Activated CD4-positive, alpha-beta memory T cell treated with anti-CD3 and anti-CD28 coated beads for 36 hours (primary cell): ENCODE measurements at regions of chrX and their contacts with region 1.

Region 1: GRCh38 chrX:24024819-24025740 is 1.9 kb downstream of the KLHL15 start:
- DNase-seq: peak; percentile 91
- H3K4me3 Mint-ChIP-seq: peak overlapping the region; percentile 80
- H3K27ac Mint-ChIP-seq: no peak overlapping the region
- H3K4me1 Mint-ChIP-seq: peaks cover 25% of the 10 kb centered on the region
- H3K27me3 Mint-ChIP-seq: no peaks in the 10 kb centered on the region

Region 2: DNA sequence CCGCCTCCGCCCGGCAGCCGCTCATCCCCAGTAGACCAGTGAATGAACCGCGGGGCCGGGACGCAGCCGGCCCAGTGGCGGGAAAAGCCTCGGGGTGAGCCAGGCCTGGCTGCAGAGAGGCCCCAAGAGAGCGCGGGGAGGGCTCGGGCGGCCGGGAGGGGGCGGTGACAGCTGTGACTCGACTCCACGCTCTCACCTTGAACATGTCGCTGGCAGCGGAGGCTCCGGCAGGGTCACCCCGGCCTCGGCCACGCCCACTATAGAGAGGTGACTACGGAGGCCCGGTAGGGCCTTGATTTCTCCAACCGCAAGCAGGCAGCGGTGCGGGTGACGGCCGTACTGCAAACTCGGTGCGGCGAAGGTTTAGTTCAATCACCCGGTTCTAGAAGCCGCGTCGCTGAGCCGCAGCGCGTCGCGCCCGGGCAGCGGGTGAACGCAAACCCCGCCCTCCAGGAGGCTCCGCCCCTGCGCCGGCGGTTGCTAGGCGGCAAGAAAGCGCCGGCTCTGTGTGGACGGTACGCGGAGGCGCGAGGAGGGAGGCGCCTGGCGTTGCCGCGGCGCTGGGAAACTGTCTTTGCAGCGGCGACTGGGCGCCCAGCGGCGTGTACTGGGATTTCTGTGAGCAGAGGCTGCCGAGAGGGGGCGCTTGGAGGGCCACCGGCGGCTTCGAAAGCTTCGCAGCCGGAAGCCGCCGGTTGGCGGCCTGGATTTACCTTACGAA is 117.4 kb before region 1 on chrX and contains the starts of genes APOO and CXorf58:
- CTCF ChIA-PET with region 1: interaction called, 16 read pairs
- POLR2A ChIA-PET with region 1: interaction called, 5 read pairs
- intact Hi-C with region 1: loop called (anchors 1 kb)
- DNase-seq: peak; percentile 94
- H3K4me3 Mint-ChIP-seq: peak within 1 kb of the TSS; percentile 74
- H3K27ac Mint-ChIP-seq: peak within 1 kb of the TSS; percentile 87
- H3K4me1 Mint-ChIP-seq: peaks cover 21% of the 10 kb centered on the region
- H3K27me3 Mint-ChIP-seq: no peaks in the 10 kb centered on the region
- total RNA-seq, gene APOO: 32.8 to 35.0 TPM
- total RNA-seq, gene CXorf58: 0.17 TPM in 1 of 2 experiments, not detected in the other

Region 3: GRCh38 chrX:23952984-23953907 is 71.8 kb before region 1 on chrX:
- CTCF ChIA-PET with region 1: interaction called, 3 read pairs
- POLR2A ChIA-PET with region 1: no interaction called
- intact Hi-C with region 1: loop called (anchors 1 kb)
- DNase-seq: peak; percentile 54
- H3K4me3 Mint-ChIP-seq: peak overlapping the region; percentile 73
- H3K27ac Mint-ChIP-seq: peak overlapping the region; percentile 92
- H3K4me1 Mint-ChIP-seq: peaks cover 6% of the 10 kb centered on the region
- H3K27me3 Mint-ChIP-seq: no peaks in the 10 kb centered on the region

Region 4: DNA sequence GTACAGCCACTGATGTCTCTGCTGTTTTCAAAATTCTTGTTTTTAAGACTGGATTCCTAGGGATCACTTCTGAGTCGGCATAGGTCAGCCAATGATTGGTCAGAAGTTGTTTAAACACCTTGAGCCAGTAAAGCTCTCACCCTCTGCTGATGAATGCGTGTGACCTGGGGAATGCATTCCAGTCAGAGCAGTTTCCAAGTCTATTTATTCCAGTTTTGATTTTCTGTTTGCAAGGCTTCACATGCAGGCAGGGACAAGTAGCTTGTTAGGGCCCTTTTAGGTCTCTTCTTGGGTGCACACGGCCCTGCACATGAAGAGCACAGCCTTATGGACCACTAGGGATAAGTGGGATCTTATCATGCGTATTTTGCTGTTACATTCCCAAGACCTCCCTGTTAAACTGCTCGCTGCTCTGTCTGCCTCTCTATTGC is 45.1 kb before region 1 on chrX:
- CTCF ChIA-PET with region 1: no interaction called
- POLR2A ChIA-PET with region 1: no interaction called
- intact Hi-C with region 1: no loop called
- DNase-seq: no peak
- H3K4me3 Mint-ChIP-seq: no peak overlapping the region
- H3K27ac Mint-ChIP-seq: no peak overlapping the region
- H3K4me1 Mint-ChIP-seq: no peaks in the 10 kb centered on the region
- H3K27me3 Mint-ChIP-seq: no peaks in the 10 kb centered on the region

Region 5: GRCh38 chrX:24014388-24015018 is 10.6 kb before region 1 on chrX:
- CTCF ChIA-PET with region 1: interaction called, 3 read pairs
- POLR2A ChIA-PET with region 1: interaction called, 14 read pairs
- intact Hi-C with region 1: loop called (anchors 1 kb)
- DNase-seq: peak; percentile 76
- H3K4me3 Mint-ChIP-seq: peak overlapping the region; percentile 33
- H3K27ac Mint-ChIP-seq: peak overlapping the region; percentile 84
- H3K4me1 Mint-ChIP-seq: peaks cover 36% of the 10 kb centered on the region
- H3K27me3 Mint-ChIP-seq: no peaks in the 10 kb centered on the region